ENCODE measurements at regions of chr5 and their contacts with region 1.

Region 1: GRCh38 chr5:178058321-178059012 is 54.9 kb upstream of the N4BP3 start:
- DNase-seq: no peak
- ATAC-seq: no peak
- H3K4me3 ChIP-seq: no peak overlapping the region
- H3K4me3 Mint-ChIP-seq: no peak overlapping the region
- H3K27ac ChIP-seq: no peak overlapping the region
- H3K27ac Mint-ChIP-seq: no peak overlapping the region
- H3K4me1 ChIP-seq: no peaks in the 10 kb centered on the region
- H3K4me1 Mint-ChIP-seq: peaks cover 0 to 5% (median 4%) of the 10 kb centered on the region in 7 donors
- H3K27me3 ChIP-seq: no peaks in the 10 kb centered on the region
- H3K27me3 Mint-ChIP-seq: peaks cover 0 to 4% (median 0%) of the 10 kb centered on the region in 5 donors

Region 2: DNA sequence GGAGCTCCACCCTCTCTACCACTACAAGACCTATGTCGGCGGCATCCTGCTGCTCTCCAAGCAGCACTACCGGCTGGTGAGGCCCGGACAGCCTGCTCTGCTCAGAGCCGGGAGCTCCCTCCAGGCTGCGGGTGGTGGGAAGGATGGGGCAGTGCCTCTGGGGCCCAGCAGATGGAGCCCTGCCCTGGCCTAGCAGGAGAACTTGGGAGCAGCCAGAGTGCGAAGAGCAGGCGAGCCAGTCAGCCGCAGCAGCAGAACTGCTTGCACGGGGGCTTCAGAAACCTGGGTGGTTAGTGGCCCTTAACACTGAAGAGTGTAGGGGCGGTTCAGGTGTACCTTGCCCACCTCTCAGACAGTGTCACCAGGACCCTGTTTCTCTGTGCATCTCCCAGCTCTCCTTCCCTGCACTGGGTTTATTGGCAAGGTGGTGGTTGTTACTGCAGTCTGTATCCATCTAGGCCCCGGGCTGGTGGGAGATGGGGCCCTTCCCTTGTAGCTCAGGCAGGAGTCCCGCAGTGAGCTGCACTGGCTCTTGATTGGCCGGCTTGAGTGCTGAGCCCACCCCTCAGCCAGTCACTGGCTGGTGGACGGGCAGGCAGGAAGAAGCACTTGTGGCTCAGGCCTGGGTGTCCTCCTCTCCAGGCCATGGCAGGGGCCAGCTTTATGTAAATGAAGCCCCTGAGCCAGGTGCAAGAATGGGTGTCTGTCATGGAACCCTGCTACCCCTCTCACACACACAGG is 450.8 kb before region 1 on chr5:
- CTCF ChIA-PET with region 1: interaction called, 6 read pairs
- POLR2A ChIA-PET with region 1: no interaction called
- intact Hi-C with region 1: loop called (anchors 1 kb)
- DNase-seq: peak; percentile 38 to 67 (median 63)
- ATAC-seq: peak; percentile 87
- H3K4me3 ChIP-seq: no peak overlapping the region
- H3K4me3 Mint-ChIP-seq: peak overlapping the region in 1 of 10 donors; percentile 53
- H3K27ac ChIP-seq: no peak overlapping the region
- H3K27ac Mint-ChIP-seq: peak overlapping the region in 1 of 9 donors; percentile 30
- H3K4me1 ChIP-seq: no peaks in the 10 kb centered on the region
- H3K4me1 Mint-ChIP-seq: peaks cover 4 to 34% (median 26%) of the 10 kb centered on the region in 7 donors
- H3K27me3 ChIP-seq: no peaks in the 10 kb centered on the region
- H3K27me3 Mint-ChIP-seq: no peaks in the 10 kb centered on the region

Region 3: GRCh38 chr5:177982072-177982727 is 76.3 kb before region 1 on chr5:
- CTCF ChIA-PET with region 1: no interaction called
- POLR2A ChIA-PET with region 1: no interaction called
- intact Hi-C with region 1: loop called in 1 of 2 experiments (anchors 5 kb)
- DNase-seq: peak in 4 of 9 donors; percentile 15 to 33 (median 26)
- ATAC-seq: no peak
- H3K4me3 ChIP-seq: no peak overlapping the region
- H3K4me3 Mint-ChIP-seq: no peak overlapping the region
- H3K27ac ChIP-seq: no peak overlapping the region
- H3K27ac Mint-ChIP-seq: no peak overlapping the region
- H3K4me1 ChIP-seq: no peaks in the 10 kb centered on the region
- H3K4me1 Mint-ChIP-seq: peaks cover 4 to 13% (median 9%) of the 10 kb centered on the region in 7 donors
- H3K27me3 ChIP-seq: peaks cover 0 to 36% of the 10 kb centered on the region in 2 donors
- H3K27me3 Mint-ChIP-seq: peaks cover 36 to 62% (median 47%) of the 10 kb centered on the region in 5 donors

Region 4: DNA sequence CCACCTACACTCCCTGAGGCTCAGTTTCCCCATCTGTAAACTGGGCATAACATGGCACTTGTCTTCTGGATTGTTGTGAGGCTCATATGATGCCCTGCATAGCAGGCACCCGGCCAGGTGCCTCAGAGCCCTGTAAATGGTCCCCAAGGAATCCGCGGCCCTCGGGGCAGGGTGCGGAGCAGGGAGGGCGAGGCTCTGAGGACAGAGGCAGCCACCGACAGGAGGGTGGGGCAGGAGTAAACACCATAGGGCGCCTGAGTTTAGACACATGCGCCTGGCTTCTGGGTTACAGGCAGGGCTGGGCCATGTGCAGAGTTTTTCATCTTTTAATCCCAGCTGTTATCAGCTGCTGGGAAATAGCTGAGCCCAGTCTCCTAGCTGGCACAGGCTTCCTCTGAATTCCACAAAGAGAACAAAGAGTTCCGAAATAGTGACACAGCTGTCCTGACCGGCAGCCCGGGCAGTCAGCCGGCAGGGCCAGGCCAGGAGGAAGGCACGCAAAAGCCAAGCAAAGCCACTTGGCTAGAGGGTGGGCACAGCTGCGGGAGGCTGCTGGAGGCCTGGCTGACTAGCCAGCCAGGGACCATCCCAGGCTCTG is 273.0 kb after region 1 on chr5:
- CTCF ChIA-PET with region 1: no interaction called
- POLR2A ChIA-PET with region 1: no interaction called
- intact Hi-C with region 1: no loop called
- DNase-seq: no peak
- ATAC-seq: no peak
- H3K4me3 ChIP-seq: no peak overlapping the region
- H3K4me3 Mint-ChIP-seq: no peak overlapping the region
- H3K27ac ChIP-seq: no peak overlapping the region
- H3K27ac Mint-ChIP-seq: no peak overlapping the region
- H3K4me1 ChIP-seq: no peaks in the 10 kb centered on the region
- H3K4me1 Mint-ChIP-seq: peaks cover 2 to 12% (median 8%) of the 10 kb centered on the region in 7 donors
- H3K27me3 ChIP-seq: no peaks in the 10 kb centered on the region
- H3K27me3 Mint-ChIP-seq: no peaks in the 10 kb centered on the region

Measured in naive thymus-derived CD4-positive, alpha-beta T cell (primary cell).